ENCODE measurements at regions of chr13 and their contacts with region 1.

Region 1: DNA sequence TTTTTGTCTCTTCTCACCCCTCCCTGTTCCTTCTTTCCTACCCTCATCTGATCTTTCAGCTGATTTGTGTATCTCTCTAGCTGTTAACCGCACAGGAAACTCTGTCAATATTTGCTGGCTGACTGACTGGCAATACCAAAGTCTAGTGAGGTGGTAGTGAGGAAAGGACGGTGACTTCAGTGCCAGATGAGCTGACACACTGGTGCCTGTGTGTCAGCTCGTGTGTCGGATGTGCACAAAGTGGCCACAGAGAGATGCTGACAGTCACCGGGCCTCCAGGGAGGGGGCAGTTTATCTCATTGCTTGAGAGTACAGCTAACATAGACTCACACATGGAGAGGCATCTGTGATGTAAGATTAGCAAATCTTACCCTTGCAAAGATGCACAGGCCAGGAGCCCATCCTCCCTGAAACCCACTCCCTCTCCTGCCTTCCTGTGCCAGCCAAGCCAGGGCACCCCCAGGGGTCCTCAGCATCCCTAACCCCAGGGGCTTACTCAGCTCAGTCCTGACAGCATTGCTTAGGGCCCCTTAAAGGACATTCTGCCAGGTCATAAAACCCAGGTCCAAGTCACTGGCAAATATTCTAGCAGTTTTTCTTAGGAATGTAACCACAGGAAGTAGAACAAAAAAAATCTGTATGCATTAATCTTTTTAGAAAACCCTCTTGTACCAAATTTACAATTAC is 80.2 kb downstream of the SHISA2 start:
- DNase-seq: peak in 13 of 14 experiments; percentile 19 to 75 (median 44)
- ATAC-seq: peak; percentile 83
- H3K4me3 ChIP-seq: no peak overlapping the region
- H3K4me3 Mint-ChIP-seq: peak overlapping the region; percentile 30
- H3K27ac ChIP-seq: peak overlapping the region in 1 of 2 donors; percentile 65
- H3K27ac Mint-ChIP-seq: peak overlapping the region; percentile 57
- H3K4me1 ChIP-seq: peaks cover 48% of the 10 kb centered on the region
- H3K4me1 Mint-ChIP-seq: peaks cover 62% of the 10 kb centered on the region
- H3K27me3 ChIP-seq: no peaks in the 10 kb centered on the region
- H3K27me3 Mint-ChIP-seq: no peaks in the 10 kb centered on the region
- CTCF ChIP-seq: no peak

Region 2: GRCh38 chr13:26011996-26012821 is 40.6 kb after region 1 on chr13:
- CTCF ChIA-PET with region 1: no interaction called
- POLR2A ChIA-PET with region 1: no interaction called
- intact Hi-C with region 1: loop called in 1 of 2 experiments (anchors 1 kb)
- DNase-seq: peak; percentile 47 to 85 (median 60)
- ATAC-seq: peak; percentile 95
- H3K4me3 ChIP-seq: peak overlapping the region; percentile 57
- H3K4me3 Mint-ChIP-seq: peak overlapping the region; percentile 85
- H3K27ac ChIP-seq: peak overlapping the region; percentile 46 to 74
- H3K27ac Mint-ChIP-seq: peak overlapping the region; percentile 91
- H3K4me1 ChIP-seq: peaks cover 17% of the 10 kb centered on the region
- H3K4me1 Mint-ChIP-seq: peaks cover 14% of the 10 kb centered on the region
- H3K27me3 ChIP-seq: no peaks in the 10 kb centered on the region
- H3K27me3 Mint-ChIP-seq: no peaks in the 10 kb centered on the region
- CTCF ChIP-seq: no peak

Region 3: GRCh38 chr13:26048741-26049140 is 77.1 kb after region 1 on chr13:
- CTCF ChIA-PET with region 1: no interaction called
- POLR2A ChIA-PET with region 1: no interaction called
- intact Hi-C with region 1: loop called in 1 of 2 experiments (anchors 5 kb)
- DNase-seq: no peak
- ATAC-seq: no peak
- H3K4me3 ChIP-seq: no peak overlapping the region
- H3K4me3 Mint-ChIP-seq: peak overlapping the region; percentile 6
- H3K27ac ChIP-seq: no peak overlapping the region
- H3K27ac Mint-ChIP-seq: no peak overlapping the region
- H3K4me1 ChIP-seq: peaks cover 26% of the 10 kb centered on the region
- H3K4me1 Mint-ChIP-seq: peaks cover 27% of the 10 kb centered on the region
- H3K27me3 ChIP-seq: peaks cover 21 to 31% of the 10 kb centered on the region in 2 experiments
- H3K27me3 Mint-ChIP-seq: peaks cover 40% of the 10 kb centered on the region
- CTCF ChIP-seq: no peak

Region 4: GRCh38 chr13:27830010-27830409 is 1858.4 kb after region 1 on chr13:
- CTCF ChIA-PET with region 1: no interaction called
- POLR2A ChIA-PET with region 1: no interaction called
- intact Hi-C with region 1: no loop called
- DNase-seq: peak in 13 of 14 experiments; percentile 29 to 78 (median 51)
- ATAC-seq: peak; percentile 66
- H3K4me3 ChIP-seq: peak overlapping the region; percentile 26
- H3K4me3 Mint-ChIP-seq: peak overlapping the region; percentile 22
- H3K27ac ChIP-seq: no peak overlapping the region
- H3K27ac Mint-ChIP-seq: no peak overlapping the region
- H3K4me1 ChIP-seq: peaks cover 13% of the 10 kb centered on the region
- H3K4me1 Mint-ChIP-seq: peaks cover 6% of the 10 kb centered on the region
- H3K27me3 ChIP-seq: peaks cover 32 to 53% of the 10 kb centered on the region in 2 experiments
- H3K27me3 Mint-ChIP-seq: peaks cover 88% of the 10 kb centered on the region
- CTCF ChIP-seq: peak; percentile 99

Measured in CD4-positive, alpha-beta T cell (primary cell).